MCF 10A (cell line): ENCODE measurements at regions of chr2 and their contacts with region 1.

Region 1: DNA sequence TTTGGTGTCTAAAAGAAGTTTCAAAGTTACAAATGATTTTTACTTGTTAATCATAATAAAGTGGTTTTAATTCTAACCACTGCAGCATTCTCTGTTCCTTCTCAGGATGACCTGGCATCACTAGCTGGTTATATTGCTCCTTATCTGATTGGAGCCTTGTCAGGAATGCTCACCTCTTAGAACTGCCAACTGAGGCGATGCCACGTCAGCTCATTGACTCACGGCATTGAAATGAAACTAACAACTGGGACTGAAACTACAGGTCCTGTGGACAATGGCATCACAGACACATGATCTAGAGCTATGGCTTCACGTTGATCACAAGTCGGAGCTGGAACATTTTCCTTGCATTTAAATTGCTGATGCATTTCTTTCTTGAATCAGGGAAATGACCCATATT is 54.9 kb upstream of the MAP2 start:
- DNase-seq: peak; percentile 97
- H3K4me3 Mint-ChIP-seq: peak overlapping the region; percentile 48
- H3K27ac Mint-ChIP-seq: peak overlapping the region; percentile 85
- H3K4me1 Mint-ChIP-seq: peaks cover 28% of the 10 kb centered on the region
- H3K27me3 Mint-ChIP-seq: no peaks in the 10 kb centered on the region
- CTCF ChIP-seq: no peak

Region 2: DNA sequence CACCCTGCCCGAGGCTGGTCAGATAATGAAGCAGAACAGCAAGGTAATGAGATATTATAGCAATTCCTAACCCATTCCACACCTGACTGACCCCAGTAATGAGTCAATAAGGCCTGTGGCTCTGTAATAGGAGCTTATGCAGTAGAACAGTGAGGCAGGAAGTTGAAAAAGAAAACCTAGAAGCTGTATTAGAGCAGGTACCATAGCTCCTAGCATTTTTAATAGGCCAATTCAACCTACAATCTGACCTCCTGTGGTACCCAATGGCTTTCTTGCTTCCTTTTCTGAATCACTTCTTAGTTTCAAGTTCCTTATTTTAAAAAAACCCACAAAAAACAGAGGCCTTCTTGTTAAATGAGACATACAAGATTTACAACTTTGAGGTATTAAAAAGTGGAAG is 11.4 kb after region 1 on chr2:
- CTCF ChIA-PET with region 1: interaction called, 5 read pairs
- POLR2A ChIA-PET with region 1: interaction called, 14 read pairs
- intact Hi-C with region 1: no loop called
- DNase-seq: no peak
- H3K4me3 Mint-ChIP-seq: no peak overlapping the region
- H3K27ac Mint-ChIP-seq: no peak overlapping the region
- H3K4me1 Mint-ChIP-seq: peaks cover 10% of the 10 kb centered on the region
- H3K27me3 Mint-ChIP-seq: no peaks in the 10 kb centered on the region
- CTCF ChIP-seq: no peak

Region 3: DNA sequence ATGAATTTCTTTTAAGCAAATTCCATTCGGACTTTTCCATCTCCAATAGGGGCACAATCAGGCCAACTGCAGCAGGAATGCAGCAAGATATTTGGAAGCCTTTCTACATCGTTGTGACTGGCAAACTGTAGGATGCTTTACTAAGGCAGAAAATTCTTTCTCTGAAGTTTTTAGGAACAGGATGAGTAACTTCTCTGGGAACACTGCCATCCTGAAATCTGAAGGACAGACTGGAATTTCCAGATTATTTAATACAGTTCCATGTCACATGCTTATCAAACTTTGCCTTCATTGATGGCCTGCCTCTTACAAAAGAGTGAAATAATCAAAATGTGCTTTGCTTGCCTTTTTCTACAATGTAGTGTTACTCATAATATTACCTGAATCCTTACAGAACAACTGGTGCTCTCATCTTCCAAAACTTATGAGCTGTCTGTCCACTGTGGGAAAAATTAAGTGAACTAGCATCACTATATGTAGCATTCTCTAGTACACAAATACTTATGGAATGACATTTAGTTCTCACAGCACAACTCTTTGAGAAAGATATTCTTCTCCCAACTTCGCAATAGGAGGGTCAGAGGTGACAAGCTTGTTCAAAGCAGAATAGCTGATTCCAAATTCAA is 23.0 kb after region 1 on chr2:
- CTCF ChIA-PET with region 1: no interaction called
- POLR2A ChIA-PET with region 1: interaction called, 17 read pairs
- intact Hi-C with region 1: no loop called
- DNase-seq: peak; percentile 54
- H3K4me3 Mint-ChIP-seq: no peak overlapping the region
- H3K27ac Mint-ChIP-seq: peak overlapping the region; percentile 31
- H3K4me1 Mint-ChIP-seq: peaks cover 20% of the 10 kb centered on the region
- H3K27me3 Mint-ChIP-seq: no peaks in the 10 kb centered on the region
- CTCF ChIP-seq: no peak